Activated CD4-positive, alpha-beta memory T cell treated with anti-CD3 and anti-CD28 coated beads, Interleukin-2, amount 10 ng/mL, durations not matched to agents 7 days and 5 days (primary cell): ENCODE measurements at regions of chr2 and their contacts with region 1.

Region 1: GRCh38 chr2:148509288-148509902 is 135.2 kb upstream of the EPC2 start:
- DNase-seq: peak; percentile 88
- H3K4me3 Mint-ChIP-seq: peak overlapping the region; percentile 58
- H3K27ac Mint-ChIP-seq: no peak overlapping the region
- H3K4me1 Mint-ChIP-seq: peaks cover 17% of the 10 kb centered on the region
- H3K27me3 Mint-ChIP-seq: no peaks in the 10 kb centered on the region

Region 2: DNA sequence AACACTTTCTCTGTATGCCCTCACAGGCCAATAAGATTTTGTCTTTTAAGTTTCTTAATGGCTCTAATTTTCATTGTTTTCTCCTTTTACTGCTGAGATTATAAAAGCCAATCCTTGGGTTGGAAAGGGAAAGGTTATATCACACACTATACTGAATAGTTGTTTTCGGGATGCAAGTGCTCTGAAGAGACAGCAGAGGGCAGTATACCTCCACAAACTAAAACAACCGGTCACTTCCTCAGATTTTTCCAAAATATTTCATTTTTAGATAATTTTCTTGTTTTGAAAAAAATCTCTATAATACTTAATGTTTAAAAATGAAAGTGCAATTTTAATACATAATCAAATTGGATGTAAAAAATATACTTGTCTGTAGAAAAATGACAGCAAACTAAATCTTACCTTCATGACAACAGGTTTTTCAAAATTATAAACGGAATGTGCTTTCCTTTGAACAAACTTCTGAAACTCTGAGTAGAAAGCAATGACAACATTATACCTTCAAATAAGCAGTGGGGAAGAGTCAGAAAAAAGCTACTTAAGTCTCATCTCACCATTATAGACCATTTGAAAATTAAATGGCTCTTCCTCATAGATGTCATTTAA is 571.5 kb before region 1 on chr2:
- CTCF ChIA-PET with region 1: interaction called, 20 read pairs
- POLR2A ChIA-PET with region 1: no interaction called
- DNase-seq: no peak
- H3K4me3 Mint-ChIP-seq: no peak overlapping the region
- H3K27ac Mint-ChIP-seq: no peak overlapping the region
- H3K4me1 Mint-ChIP-seq: no peaks in the 10 kb centered on the region
- H3K27me3 Mint-ChIP-seq: no peaks in the 10 kb centered on the region

Region 3: GRCh38 chr2:148475626-148476025 is 33.8 kb before region 1 on chr2:
- CTCF ChIA-PET with region 1: interaction called, 11 read pairs
- POLR2A ChIA-PET with region 1: no interaction called
- DNase-seq: no peak
- H3K4me3 Mint-ChIP-seq: no peak overlapping the region
- H3K27ac Mint-ChIP-seq: no peak overlapping the region
- H3K4me1 Mint-ChIP-seq: no peaks in the 10 kb centered on the region
- H3K27me3 Mint-ChIP-seq: peaks cover 7% of the 10 kb centered on the region

Region 4: GRCh38 chr2:148524519-148524919 is 15.1 kb after region 1 on chr2:
- CTCF ChIA-PET with region 1: interaction called, 36 read pairs
- POLR2A ChIA-PET with region 1: interaction called, 11 read pairs
- DNase-seq: peak; percentile 65
- H3K4me3 Mint-ChIP-seq: no peak overlapping the region
- H3K27ac Mint-ChIP-seq: peak overlapping the region; percentile 29
- H3K4me1 Mint-ChIP-seq: peaks cover 59% of the 10 kb centered on the region
- H3K27me3 Mint-ChIP-seq: no peaks in the 10 kb centered on the region

Region 5: GRCh38 chr2:148644883-148645538 is 135.6 kb after region 1 on chr2:
- CTCF ChIA-PET with region 1: interaction called, 4 read pairs
- POLR2A ChIA-PET with region 1: interaction called, 11 read pairs
- DNase-seq: peak; percentile 95
- H3K4me3 Mint-ChIP-seq: peak overlapping the region; percentile 84
- H3K27ac Mint-ChIP-seq: peak overlapping the region; percentile 89
- H3K4me1 Mint-ChIP-seq: peaks cover 37% of the 10 kb centered on the region
- H3K27me3 Mint-ChIP-seq: peaks cover 30% of the 10 kb centered on the region

Region 6: DNA sequence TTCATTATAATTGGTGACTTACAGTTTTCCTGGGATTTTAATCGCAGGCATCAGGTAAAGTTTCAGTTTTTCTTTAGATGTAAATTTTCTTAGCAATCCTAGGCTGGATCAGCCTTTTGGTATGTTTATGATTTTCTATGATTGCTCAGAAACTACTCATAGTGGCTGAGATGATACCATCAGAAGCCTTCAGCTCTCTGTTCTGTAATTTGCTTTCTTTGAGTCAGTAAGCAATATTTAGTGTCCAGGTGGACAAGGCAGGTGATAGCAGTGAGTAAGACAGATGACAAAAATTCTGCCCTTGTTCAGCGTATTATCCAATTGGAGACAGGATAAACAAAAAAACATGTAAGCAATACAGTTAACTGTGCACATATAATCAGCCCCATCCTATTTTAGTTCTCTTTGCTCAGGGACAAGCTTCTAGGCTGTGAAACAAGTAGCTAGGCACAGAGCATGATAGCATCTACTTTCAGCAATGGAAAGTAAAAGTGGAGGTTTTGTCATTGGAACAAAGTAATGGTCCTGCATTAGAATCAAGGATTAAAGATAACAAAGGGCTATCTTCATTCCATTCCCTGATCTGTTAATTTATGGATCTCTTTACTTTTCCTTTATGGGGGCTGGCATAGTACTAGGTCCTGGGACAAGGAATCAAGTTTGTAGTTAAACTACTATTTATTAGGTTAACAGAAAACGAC is 235.9 kb after region 1 on chr2:
- CTCF ChIA-PET with region 1: no interaction called
- POLR2A ChIA-PET with region 1: no interaction called
- DNase-seq: no peak
- H3K4me3 Mint-ChIP-seq: no peak overlapping the region
- H3K27ac Mint-ChIP-seq: no peak overlapping the region
- H3K4me1 Mint-ChIP-seq: peaks cover 3% of the 10 kb centered on the region
- H3K27me3 Mint-ChIP-seq: no peaks in the 10 kb centered on the region